GM18951 (cell line): ENCODE measurements at regions of chr4 and their contacts with region 1.

Region 1: DNA sequence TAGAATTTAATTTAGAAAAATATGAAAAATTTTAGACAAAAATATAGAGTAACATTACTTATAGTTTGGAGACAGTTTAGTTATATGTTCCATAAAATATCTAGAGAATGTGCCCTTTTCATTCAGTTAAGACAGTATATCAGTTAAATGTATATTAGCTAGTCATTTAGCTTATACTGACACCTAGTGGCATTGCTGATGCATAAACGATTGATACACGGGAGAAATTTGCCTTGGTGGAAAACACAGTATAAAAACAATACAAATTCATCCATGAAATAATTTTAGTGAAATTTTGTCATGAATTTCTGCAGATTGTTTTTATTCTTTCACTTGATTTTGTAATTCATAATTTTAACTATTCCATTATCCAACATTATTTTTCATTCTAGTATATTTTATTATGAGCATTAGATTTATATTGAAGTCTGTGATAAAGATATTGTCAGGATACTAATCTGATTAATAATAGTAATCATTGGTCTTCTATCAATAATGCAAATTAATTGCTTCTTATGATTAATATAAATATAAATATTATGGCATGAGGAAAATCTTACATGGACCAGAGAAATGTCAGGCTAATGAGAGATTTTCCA is 219.0 kb downstream of the TLL1 start:
- POLR2A ChIP-seq: no peak

Region 2: GRCh38 chr4:165537028-165537648 is 554.9 kb before region 1 on chr4:
- in situ Hi-C with region 1: loop called (anchors 25 kb)
- POLR2A ChIP-seq: no peak